Heart left ventricle (tissue), 16 donors: ENCODE measurements at regions of chr10 and their contacts with region 1.

Region 1: GRCh38 chr10:51950371-51950995 is 251.1 kb upstream of the CSTF2T start:
- DNase-seq: peak in 2 of 5 donors; percentile 27 to 30
- ATAC-seq: peak; percentile 32 to 63 (median 48)
- H3K4me3 ChIP-seq: no peak overlapping the region
- H3K27ac ChIP-seq: peak overlapping the region in 4 of 12 donors; percentile 16 to 30 (median 23)
- H3K4me1 ChIP-seq: peaks cover 0 to 27% (median 12%) of the 10 kb centered on the region in 12 donors
- H3K27me3 ChIP-seq: no peaks in the 10 kb centered on the region
- CTCF ChIP-seq: no peak
- POLR2A ChIP-seq: no peak

Region 2: DNA sequence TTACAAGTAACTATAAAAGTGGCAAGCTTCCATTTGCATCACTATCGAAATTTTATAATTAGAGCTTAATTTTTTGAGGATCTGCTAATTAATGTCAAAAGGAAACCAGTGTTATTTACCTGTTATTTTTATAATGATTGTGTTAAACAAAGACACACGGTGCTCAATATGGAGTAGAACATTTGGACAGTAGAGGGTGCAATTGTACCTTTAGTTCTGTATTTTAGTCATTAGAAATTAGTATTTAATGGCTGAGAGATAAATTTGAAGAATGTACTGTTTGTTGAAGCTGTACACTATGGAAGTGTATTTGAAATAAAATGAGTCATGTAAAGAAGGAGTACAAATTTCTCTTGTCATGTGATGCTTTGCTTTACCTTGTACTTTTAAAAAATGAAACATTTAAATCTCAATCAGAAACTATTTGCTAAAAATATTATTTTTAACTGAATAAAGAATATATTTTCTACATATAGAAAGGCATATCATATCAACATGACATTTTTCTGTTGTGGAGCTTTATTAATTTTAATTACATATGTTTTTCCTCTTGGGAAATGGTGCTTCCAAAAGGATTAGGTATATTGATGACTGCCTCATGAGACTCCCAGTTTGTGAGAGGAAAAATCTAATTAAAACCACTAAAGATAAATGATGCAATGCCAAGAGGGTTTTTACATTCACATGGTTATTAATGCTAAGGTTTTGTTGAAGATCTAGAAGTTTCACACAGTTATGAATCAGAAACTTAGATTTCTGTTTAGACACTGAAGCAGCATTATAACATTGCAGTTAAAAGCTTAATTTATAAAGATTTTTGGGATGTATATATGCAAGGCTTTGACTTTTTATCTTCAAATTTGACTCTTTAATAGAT is 886.6 kb before region 1 on chr10:
- intact Hi-C with region 1: loop called in 3 of 10 experiments (anchors 5 to 10 kb)
- DNase-seq: no peak
- ATAC-seq: peak in 2 of 4 donors; percentile 51 to 53
- H3K4me3 ChIP-seq: no peak overlapping the region
- H3K27ac ChIP-seq: no peak overlapping the region
- H3K4me1 ChIP-seq: peaks cover 0 to 16% (median 2%) of the 10 kb centered on the region in 12 donors
- H3K27me3 ChIP-seq: no peaks in the 10 kb centered on the region
- CTCF ChIP-seq: peak; percentile 27 to 75 (median 60)
- POLR2A ChIP-seq: no peak

Region 3: GRCh38 chr10:51699475-51700227 is 250.8 kb before region 1 on chr10 and contains the start of gene CSTF2T:
- intact Hi-C with region 1: loop called in 3 of 10 experiments (anchors 10 kb)
- DNase-seq: peak; percentile 90 to 92 (median 91)
- ATAC-seq: peak; percentile 95 to 98 (median 97)
- H3K4me3 ChIP-seq: peak within 1 kb of the TSS; percentile 58 to 93 (median 74)
- H3K27ac ChIP-seq: peak within 1 kb of the TSS; percentile 88 to 98 (median 94)
- H3K4me1 ChIP-seq: peaks cover 7 to 51% (median 41%) of the 10 kb centered on the region in 12 donors
- H3K27me3 ChIP-seq: no peaks in the 10 kb centered on the region
- CTCF ChIP-seq: no peak
- POLR2A ChIP-seq: peak in 1 of 2 donors; percentile 18
- total RNA-seq, gene CSTF2T: 18.5 to 27.4 (median 22.7) TPM

Region 4: GRCh38 chr10:51886438-51887068 is 63.9 kb before region 1 on chr10:
- intact Hi-C with region 1: loop called in 1 of 10 experiments (anchors 10 kb)
- DNase-seq: no peak
- ATAC-seq: no peak
- H3K4me3 ChIP-seq: no peak overlapping the region
- H3K27ac ChIP-seq: peak overlapping the region in 1 of 12 donors; percentile 8
- H3K4me1 ChIP-seq: peaks cover 0 to 19% (median 4%) of the 10 kb centered on the region in 12 donors
- H3K27me3 ChIP-seq: no peaks in the 10 kb centered on the region
- CTCF ChIP-seq: no peak
- POLR2A ChIP-seq: no peak

Region 5: DNA sequence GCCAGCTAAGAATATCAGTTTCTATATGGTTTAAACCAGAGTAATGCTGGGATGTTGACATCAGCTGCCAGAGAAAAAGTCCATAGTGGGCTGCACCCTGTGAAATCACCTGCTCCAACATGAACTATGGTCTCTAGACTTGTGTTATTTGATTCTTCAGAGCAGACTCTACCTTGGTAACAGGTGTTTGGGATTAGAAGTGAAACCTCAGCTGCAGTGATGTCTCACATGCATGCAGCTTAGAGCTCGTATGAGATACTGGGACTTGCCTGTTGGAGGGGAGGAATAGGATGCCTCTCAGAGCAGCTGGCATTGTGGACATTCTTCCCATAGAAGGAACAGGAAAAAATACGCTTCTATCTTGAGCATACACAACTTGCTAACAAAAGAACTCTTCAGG is 36.0 kb after region 1 on chr10:
- intact Hi-C with region 1: no loop called
- DNase-seq: no peak
- ATAC-seq: no peak
- H3K4me3 ChIP-seq: no peak overlapping the region
- H3K27ac ChIP-seq: no peak overlapping the region
- H3K4me1 ChIP-seq: peaks cover 0 to 18% (median 0%) of the 10 kb centered on the region in 12 donors
- H3K27me3 ChIP-seq: no peaks in the 10 kb centered on the region
- CTCF ChIP-seq: no peak
- POLR2A ChIP-seq: no peak